PC-9 (cell line): ENCODE measurements at regions of chr5 and their contacts with region 1.

Region 1: DNA sequence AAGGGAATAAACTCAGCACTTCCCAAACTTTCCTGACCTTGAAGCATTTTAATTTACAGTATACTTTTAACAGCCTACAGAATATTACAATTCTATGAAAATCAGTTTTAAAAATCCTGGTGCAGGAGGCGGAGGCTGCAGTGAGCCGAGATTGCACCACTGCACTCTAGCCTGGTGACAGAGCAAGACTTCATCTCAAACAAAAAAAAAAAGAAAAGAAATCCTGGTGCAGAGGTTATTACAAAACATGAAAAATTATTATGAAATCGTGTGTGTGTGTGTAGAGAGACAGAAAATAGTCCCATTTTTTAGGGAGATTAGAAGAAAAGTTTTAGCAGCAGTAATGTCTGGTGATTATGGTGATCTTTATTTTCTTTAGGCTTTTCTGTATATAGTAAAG is 26.9 kb downstream of the GOLPH3 start:
- DNase-seq: peak in 1 of 2 experiments; percentile 28
- H3K4me3 ChIP-seq: no peak overlapping the region
- H3K27ac ChIP-seq: no peak overlapping the region
- H3K4me1 ChIP-seq: no peaks in the 10 kb centered on the region
- H3K27me3 ChIP-seq: no peaks in the 10 kb centered on the region
- CTCF ChIP-seq: no peak

Region 2: GRCh38 chr5:32210151-32210550 is 62.9 kb after region 1 on chr5:
- CTCF ChIA-PET with region 1: no interaction called
- POLR2A ChIA-PET with region 1: interaction called, 15 read pairs
- intact Hi-C with region 1: no loop called
- DNase-seq: no peak
- H3K4me3 ChIP-seq: no peak overlapping the region
- H3K27ac ChIP-seq: no peak overlapping the region
- H3K4me1 ChIP-seq: peaks cover 9% of the 10 kb centered on the region
- H3K27me3 ChIP-seq: no peaks in the 10 kb centered on the region
- CTCF ChIP-seq: no peak